Vagina (tissue), 2 donors: ENCODE measurements at regions of chr4 and their contacts with region 1.

Region 1: DNA sequence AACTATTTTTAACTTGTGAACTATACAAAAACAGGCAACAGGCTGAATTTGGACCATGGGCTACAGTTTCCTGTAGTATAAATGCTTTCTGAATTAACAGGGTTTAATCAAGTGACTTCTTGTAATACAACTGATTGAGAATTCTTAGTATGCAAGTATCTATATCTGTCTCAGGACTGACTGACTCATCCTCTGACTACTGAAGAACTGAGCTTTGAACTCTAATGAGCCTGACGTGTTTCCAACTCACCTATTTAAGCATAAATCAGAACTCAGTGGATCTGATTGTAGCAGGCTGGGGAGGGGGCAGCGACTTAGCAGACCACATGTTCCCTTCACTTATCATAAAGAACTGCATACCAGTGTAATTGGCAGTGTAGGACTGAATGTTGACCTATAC is 7.8 kb downstream of the SPATA4 start:
- DNase-seq: no peak
- H3K4me3 ChIP-seq: no peak overlapping the region
- H3K27ac ChIP-seq: peak overlapping the region; percentile 33
- H3K4me1 ChIP-seq: peaks cover 7% of the 10 kb centered on the region
- H3K27me3 ChIP-seq: no peaks in the 10 kb centered on the region
- CTCF ChIP-seq: no peak
- POLR2A ChIP-seq: no peak

Region 2: DNA sequence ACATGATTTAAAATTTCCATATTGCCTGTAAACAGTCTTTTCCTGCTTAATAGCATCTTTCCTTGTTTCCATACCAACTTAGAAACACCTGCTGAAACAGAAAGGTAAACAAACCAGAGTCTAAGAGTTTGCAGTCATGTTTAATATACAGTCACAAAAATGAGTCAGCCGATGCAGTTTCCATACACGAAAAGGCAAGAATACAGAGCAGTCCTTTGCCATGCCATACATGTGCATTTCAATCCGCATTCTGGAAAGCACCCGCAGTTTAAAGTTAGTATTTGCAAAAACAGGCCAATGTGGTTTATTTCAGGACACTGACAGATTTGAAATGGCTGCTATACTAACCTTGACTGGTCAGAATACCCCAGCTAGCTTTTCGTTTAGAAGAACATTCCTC is 49.3 kb after region 1 on chr4:
- intact Hi-C with region 1: loop called (anchors 2 kb)
- DNase-seq: no peak
- H3K4me3 ChIP-seq: no peak overlapping the region
- H3K27ac ChIP-seq: no peak overlapping the region
- H3K4me1 ChIP-seq: no peaks in the 10 kb centered on the region
- H3K27me3 ChIP-seq: no peaks in the 10 kb centered on the region
- CTCF ChIP-seq: no peak
- POLR2A ChIP-seq: no peak